ENCODE measurements at regions of chr14 and their contacts with region 1.

Region 1: DNA sequence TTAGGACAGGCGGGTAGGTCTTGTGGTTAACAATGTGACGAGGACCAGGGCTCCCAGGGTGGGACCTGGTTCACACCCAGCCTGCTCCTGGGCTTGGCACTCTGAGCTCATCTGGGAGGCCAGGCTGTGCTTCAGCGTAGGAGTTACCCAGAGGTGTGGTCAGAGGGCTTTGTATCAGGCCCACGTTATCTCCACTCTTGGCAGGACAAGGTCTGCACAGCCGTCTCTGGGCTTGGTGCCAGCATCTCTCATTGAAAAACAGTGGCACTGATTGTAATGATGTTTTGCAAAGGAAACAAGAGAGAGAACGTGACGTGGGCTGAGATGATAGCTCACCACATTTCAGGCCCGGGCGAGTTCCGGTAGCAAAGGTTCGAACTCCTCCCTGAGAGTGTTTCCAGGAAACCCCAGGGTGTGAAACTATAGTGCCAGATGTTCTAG is 227.1 kb downstream of the KTN1 start:
- DNase-seq: peak; percentile 86
- H3K4me3 Mint-ChIP-seq: peak overlapping the region; percentile 33
- H3K27ac Mint-ChIP-seq: peak overlapping the region; percentile 82
- H3K4me1 Mint-ChIP-seq: peaks cover 54% of the 10 kb centered on the region
- H3K27me3 Mint-ChIP-seq: no peaks in the 10 kb centered on the region

Region 2: DNA sequence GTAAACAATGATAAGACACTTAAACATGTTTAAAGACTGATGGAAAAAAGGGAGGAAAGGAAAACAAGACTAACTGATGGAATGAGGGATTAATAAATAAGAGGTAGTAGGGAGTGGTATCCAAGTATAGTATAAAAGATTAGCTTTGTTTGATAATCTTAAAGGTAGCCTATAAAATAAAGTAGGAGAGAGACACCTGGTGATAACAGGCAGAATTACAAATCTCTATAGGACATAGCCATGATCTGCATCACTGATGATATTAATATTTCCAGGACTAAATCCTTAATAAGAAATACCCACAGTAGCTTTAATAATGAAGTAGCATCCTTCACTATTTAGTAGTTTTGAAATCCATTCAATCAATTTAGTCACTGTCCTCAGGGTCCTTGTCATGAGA is 646.1 kb before region 1 on chr14:
- CTCF ChIA-PET with region 1: no interaction called
- POLR2A ChIA-PET with region 1: no interaction called
- intact Hi-C with region 1: no loop called
- DNase-seq: no peak
- H3K4me3 Mint-ChIP-seq: no peak overlapping the region
- H3K27ac Mint-ChIP-seq: no peak overlapping the region
- H3K4me1 Mint-ChIP-seq: peaks cover 11% of the 10 kb centered on the region
- H3K27me3 Mint-ChIP-seq: no peaks in the 10 kb centered on the region

Region 3: GRCh38 chr14:55579724-55580469 is 227.2 kb before region 1 on chr14 and contains the start of gene KTN1:
- CTCF ChIA-PET with region 1: no interaction called
- POLR2A ChIA-PET with region 1: no interaction called
- intact Hi-C with region 1: loop called (anchors 2 kb)
- DNase-seq: peak; percentile 87
- H3K4me3 Mint-ChIP-seq: peak within 1 kb of the TSS; percentile 92
- H3K27ac Mint-ChIP-seq: peak within 1 kb of the TSS; percentile 90
- H3K4me1 Mint-ChIP-seq: peaks cover 31% of the 10 kb centered on the region
- H3K27me3 Mint-ChIP-seq: no peaks in the 10 kb centered on the region
- total RNA-seq, gene KTN1: 126 to 134 TPM

Region 4: GRCh38 chr14:55609681-55610080 is 197.4 kb before region 1 on chr14:
- CTCF ChIA-PET with region 1: no interaction called
- POLR2A ChIA-PET with region 1: no interaction called
- intact Hi-C with region 1: no loop called
- DNase-seq: no peak
- H3K4me3 Mint-ChIP-seq: no peak overlapping the region
- H3K27ac Mint-ChIP-seq: no peak overlapping the region
- H3K4me1 Mint-ChIP-seq: peaks cover 23% of the 10 kb centered on the region
- H3K27me3 Mint-ChIP-seq: no peaks in the 10 kb centered on the region

Region 5: DNA sequence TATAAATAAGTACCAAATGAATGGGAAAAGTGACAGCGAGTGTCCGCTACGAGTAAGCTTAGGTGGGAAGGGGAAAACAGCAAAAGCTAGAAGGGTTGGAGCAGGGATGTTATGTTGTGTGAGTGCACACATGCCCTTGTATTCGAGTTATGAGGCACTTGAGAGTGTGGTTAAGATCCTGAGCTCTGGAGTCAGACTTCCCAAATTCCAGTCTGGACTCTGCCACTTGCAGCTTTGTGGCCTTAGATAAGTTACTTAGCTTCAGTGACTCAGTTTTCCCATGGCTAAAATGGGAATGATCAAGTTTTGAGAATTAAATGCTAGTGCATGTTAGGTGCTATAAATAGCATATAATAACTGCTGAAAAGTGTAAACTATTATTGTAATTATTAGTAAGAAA is 182.2 kb before region 1 on chr14:
- CTCF ChIA-PET with region 1: no interaction called
- POLR2A ChIA-PET with region 1: no interaction called
- intact Hi-C with region 1: no loop called
- DNase-seq: no peak
- H3K4me3 Mint-ChIP-seq: no peak overlapping the region
- H3K27ac Mint-ChIP-seq: no peak overlapping the region
- H3K4me1 Mint-ChIP-seq: no peaks in the 10 kb centered on the region
- H3K27me3 Mint-ChIP-seq: no peaks in the 10 kb centered on the region

Region 6: GRCh38 chr14:55762595-55763232 is 44.4 kb before region 1 on chr14:
- CTCF ChIA-PET with region 1: no interaction called
- POLR2A ChIA-PET with region 1: no interaction called
- intact Hi-C with region 1: loop called (anchors 2 kb)
- DNase-seq: peak; percentile 25
- H3K4me3 Mint-ChIP-seq: no peak overlapping the region
- H3K27ac Mint-ChIP-seq: peak overlapping the region; percentile 55
- H3K4me1 Mint-ChIP-seq: peaks cover 17% of the 10 kb centered on the region
- H3K27me3 Mint-ChIP-seq: peaks cover 1% of the 10 kb centered on the region

Region 7: DNA sequence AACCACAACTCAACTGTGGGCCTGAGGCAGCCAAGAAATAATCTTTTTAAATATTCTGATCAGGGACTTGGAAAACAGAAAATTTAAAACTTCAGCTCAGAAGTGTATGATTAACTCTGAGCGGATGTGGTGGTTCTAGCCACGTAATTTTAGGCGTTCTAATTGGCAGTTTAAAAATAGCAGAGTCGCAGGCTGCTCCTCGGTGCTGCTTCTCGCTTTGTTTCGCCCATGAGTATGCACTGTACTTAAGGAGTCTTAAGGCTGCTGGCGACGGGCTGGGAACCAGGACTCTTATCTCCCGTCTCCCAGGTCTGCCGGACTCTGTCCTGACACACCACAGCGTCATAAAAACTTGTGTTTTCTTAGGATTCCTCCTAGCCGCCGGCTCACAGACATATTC is 197.7 kb after region 1 on chr14:
- CTCF ChIA-PET with region 1: no interaction called
- POLR2A ChIA-PET with region 1: no interaction called
- intact Hi-C with region 1: loop called (anchors 5 kb)
- DNase-seq: peak; percentile 46
- H3K4me3 Mint-ChIP-seq: no peak overlapping the region
- H3K27ac Mint-ChIP-seq: no peak overlapping the region
- H3K4me1 Mint-ChIP-seq: peaks cover 32% of the 10 kb centered on the region
- H3K27me3 Mint-ChIP-seq: peaks cover 52% of the 10 kb centered on the region

Region 8: GRCh38 chr14:56617084-56617483 is 810.0 kb after region 1 on chr14:
- CTCF ChIA-PET with region 1: no interaction called
- POLR2A ChIA-PET with region 1: no interaction called
- intact Hi-C with region 1: no loop called
- DNase-seq: no peak
- H3K4me3 Mint-ChIP-seq: no peak overlapping the region
- H3K27ac Mint-ChIP-seq: no peak overlapping the region
- H3K4me1 Mint-ChIP-seq: no peaks in the 10 kb centered on the region
- H3K27me3 Mint-ChIP-seq: no peaks in the 10 kb centered on the region